ENCODE measurements at regions of chr3 and their contacts with region 1.

Region 1: GRCh38 chr3:31573036-31573779 is 40.5 kb downstream of the STT3B start:
- DNase-seq: no peak
- H3K4me3 ChIP-seq: no peak overlapping the region
- H3K4me3 Mint-ChIP-seq: no peak overlapping the region
- H3K27ac ChIP-seq: no peak overlapping the region
- H3K27ac Mint-ChIP-seq: no peak overlapping the region
- H3K4me1 ChIP-seq: peaks cover 92% of the 10 kb centered on the region
- H3K4me1 Mint-ChIP-seq: peaks cover 32 to 60% (median 45%) of the 10 kb centered on the region in 4 donors
- H3K27me3 ChIP-seq: no peaks in the 10 kb centered on the region
- H3K27me3 Mint-ChIP-seq: no peaks in the 10 kb centered on the region

Region 2: DNA sequence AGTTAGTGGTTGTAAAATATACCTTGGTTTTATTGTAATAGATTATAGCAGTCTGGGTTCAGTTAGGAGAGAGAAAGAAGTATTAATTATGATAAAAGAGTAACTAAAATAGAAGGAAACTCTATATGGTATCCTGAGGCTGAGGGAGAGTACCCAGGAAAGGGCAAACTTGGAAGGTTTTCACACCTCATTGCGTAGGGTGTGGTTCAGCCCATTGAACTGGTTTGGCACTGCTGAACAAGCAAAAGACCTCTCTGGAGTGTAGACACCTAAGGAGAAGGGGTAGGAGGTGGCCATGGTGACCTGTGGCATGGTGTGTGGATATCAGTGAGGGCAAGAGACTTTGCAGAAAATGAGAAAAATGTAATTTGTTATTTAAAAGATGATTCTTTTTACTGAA is 23.0 kb after region 1 on chr3:
- CTCF ChIA-PET with region 1: no interaction called
- POLR2A ChIA-PET with region 1: no interaction called
- intact Hi-C with region 1: loop called (anchors 2 kb)
- DNase-seq: no peak
- H3K4me3 ChIP-seq: no peak overlapping the region
- H3K4me3 Mint-ChIP-seq: peak overlapping the region in 5 of 8 donors; percentile 6 to 44 (median 32)
- H3K27ac ChIP-seq: no peak overlapping the region
- H3K27ac Mint-ChIP-seq: peak overlapping the region in 4 of 7 donors; percentile 27 to 70 (median 50)
- H3K4me1 ChIP-seq: peaks cover 47% of the 10 kb centered on the region
- H3K4me1 Mint-ChIP-seq: peaks cover 41 to 61% (median 49%) of the 10 kb centered on the region in 4 donors
- H3K27me3 ChIP-seq: no peaks in the 10 kb centered on the region
- H3K27me3 Mint-ChIP-seq: no peaks in the 10 kb centered on the region

Region 3: GRCh38 chr3:31634481-31634880 is 61.3 kb after region 1 on chr3:
- CTCF ChIA-PET with region 1: no interaction called
- POLR2A ChIA-PET with region 1: no interaction called
- intact Hi-C with region 1: loop called (anchors 5 kb)
- DNase-seq: no peak
- H3K4me3 ChIP-seq: no peak overlapping the region
- H3K4me3 Mint-ChIP-seq: peak overlapping the region in 3 of 8 donors; percentile 30 to 50 (median 50)
- H3K27ac ChIP-seq: no peak overlapping the region
- H3K27ac Mint-ChIP-seq: peak overlapping the region in 6 of 7 donors; percentile 1 to 86 (median 48)
- H3K4me1 ChIP-seq: peaks cover 47% of the 10 kb centered on the region
- H3K4me1 Mint-ChIP-seq: peaks cover 43 to 71% (median 51%) of the 10 kb centered on the region in 4 donors
- H3K27me3 ChIP-seq: no peaks in the 10 kb centered on the region
- H3K27me3 Mint-ChIP-seq: no peaks in the 10 kb centered on the region